CD14-positive monocyte (primary cell): ENCODE measurements at regions of chr3 and their contacts with region 1.

Region 1: GRCh38 chr3:11060500-11061251 is 68.1 kb downstream of the SLC6A1 start:
- DNase-seq: peak; percentile 46 to 60 (median 55)
- H3K4me3 ChIP-seq: peak overlapping the region in 1 of 3 experiments; percentile 9
- H3K4me3 Mint-ChIP-seq: peak overlapping the region; percentile 47 to 56
- H3K27ac ChIP-seq: no peak overlapping the region
- H3K27ac Mint-ChIP-seq: peak overlapping the region in 1 of 7 donors; percentile 32
- H3K4me1 ChIP-seq: peaks cover 8 to 9% of the 10 kb centered on the region in 2 donors
- H3K4me1 Mint-ChIP-seq: peaks cover 9% of the 10 kb centered on the region
- H3K27me3 ChIP-seq: peaks cover 0 to 7% of the 10 kb centered on the region in 2 donors
- H3K27me3 Mint-ChIP-seq: peaks cover 9 to 18% (median 15%) of the 10 kb centered on the region in 3 donors
- CTCF ChIP-seq: peak; percentile 92

Region 2: DNA sequence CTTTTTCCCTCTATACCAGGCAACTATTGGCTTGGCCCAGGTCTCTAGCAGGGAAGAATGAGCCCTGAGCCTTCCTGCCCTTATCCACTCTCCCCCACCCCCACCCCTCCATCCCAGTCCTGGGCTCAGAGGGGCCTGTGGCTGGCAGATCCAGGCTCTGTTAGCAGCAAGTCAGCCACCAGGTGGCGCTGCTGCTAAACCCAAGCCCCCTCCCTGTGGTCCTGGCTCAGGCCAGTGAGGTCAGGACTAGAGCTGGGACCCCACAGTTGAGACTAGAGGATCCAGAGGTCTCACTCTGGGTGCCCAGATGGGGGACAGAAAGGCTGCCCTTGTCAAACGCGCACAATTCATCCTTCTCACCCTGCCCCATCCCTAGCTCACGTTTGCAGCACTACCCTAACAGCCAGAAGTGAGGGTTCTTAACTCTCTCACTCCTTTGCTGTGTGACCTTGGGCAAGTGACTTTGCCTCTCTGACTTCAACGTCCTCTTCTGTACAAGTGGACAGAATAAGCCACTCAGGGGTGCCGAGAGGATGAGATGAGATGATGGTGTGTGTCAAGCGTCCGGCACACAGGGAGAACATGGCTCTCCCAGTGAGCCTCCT is 114.9 kb before region 1 on chr3:
- intact Hi-C with region 1: loop called (anchors 2 to 5 kb)
- DNase-seq: peak; percentile 39 to 54 (median 53)
- H3K4me3 ChIP-seq: no peak overlapping the region
- H3K4me3 Mint-ChIP-seq: no peak overlapping the region
- H3K27ac ChIP-seq: no peak overlapping the region
- H3K27ac Mint-ChIP-seq: no peak overlapping the region
- H3K4me1 ChIP-seq: no peaks in the 10 kb centered on the region
- H3K4me1 Mint-ChIP-seq: no peaks in the 10 kb centered on the region
- H3K27me3 ChIP-seq: no peaks in the 10 kb centered on the region
- H3K27me3 Mint-ChIP-seq: peaks cover 2 to 10% (median 6%) of the 10 kb centered on the region in 3 donors
- CTCF ChIP-seq: peak; percentile 86

Region 3: DNA sequence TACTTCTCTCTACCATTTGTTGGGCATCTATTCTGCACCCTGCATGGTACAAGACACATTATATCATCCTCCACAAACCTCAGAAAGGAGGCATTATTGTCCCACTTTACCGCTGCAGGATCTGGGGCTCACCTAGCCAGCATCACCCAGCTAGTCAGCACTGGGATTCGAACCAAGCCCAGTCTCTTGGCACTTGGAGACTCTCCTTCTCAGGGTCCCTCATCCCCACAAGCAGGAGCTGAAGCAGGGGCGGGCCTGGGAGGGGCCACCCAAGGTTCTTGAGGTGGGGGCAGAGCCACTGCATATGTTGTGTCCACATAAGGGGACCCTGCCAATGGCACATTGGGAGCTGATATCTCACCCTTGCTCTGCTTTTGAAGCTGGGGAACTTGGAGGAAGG is 26.8 kb before region 1 on chr3:
- intact Hi-C with region 1: no loop called
- DNase-seq: no peak
- H3K4me3 ChIP-seq: no peak overlapping the region
- H3K4me3 Mint-ChIP-seq: no peak overlapping the region
- H3K27ac ChIP-seq: no peak overlapping the region
- H3K27ac Mint-ChIP-seq: no peak overlapping the region
- H3K4me1 ChIP-seq: no peaks in the 10 kb centered on the region
- H3K4me1 Mint-ChIP-seq: no peaks in the 10 kb centered on the region
- H3K27me3 ChIP-seq: peaks cover 16 to 38% of the 10 kb centered on the region in 2 donors
- H3K27me3 Mint-ChIP-seq: peaks cover 35 to 47% (median 42%) of the 10 kb centered on the region in 3 donors
- CTCF ChIP-seq: no peak

Region 4: DNA sequence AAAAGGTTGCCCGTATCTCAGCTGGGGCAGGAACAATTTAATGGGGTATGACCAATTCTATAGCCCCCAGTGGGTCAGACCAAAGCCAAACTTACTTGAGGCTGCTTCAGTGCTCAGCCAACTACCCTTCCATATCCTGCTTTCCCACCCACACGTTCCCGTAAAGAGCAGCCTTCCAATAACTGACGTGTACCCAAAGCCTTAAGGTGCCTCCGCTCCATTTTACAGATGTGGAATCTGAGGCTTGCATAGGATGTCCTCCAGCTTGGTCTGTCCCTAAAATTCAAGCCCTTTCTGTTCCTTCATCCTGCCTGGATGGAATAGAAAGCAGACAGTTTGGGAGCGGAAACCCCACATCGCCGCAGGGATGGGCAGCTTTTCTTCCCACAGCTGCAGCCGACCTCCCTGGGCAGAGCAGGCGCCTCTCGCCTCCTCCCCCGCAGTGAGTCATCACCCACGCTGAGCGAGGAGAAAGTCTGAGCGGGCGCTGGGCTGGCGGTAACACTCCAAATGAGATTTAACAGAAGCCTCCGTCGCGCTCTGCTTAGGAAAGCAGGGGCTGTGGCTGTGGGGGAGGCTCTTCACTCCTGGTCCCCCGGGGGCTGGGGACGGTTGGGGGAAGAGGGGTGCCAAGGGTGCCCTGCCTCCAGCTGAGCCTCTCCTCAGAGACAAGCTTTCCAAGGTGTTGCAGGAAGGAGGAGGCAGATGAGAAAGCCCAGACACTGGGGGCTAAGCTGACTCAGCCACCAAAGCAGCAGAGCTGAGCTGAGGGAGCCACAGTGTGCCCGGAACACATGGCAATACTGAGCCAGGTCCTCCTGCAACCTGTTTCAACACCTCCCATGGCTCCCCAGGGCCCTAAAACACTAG is 35.8 kb after region 1 on chr3:
- intact Hi-C with region 1: loop called in 1 of 2 experiments (anchors 5 kb)
- DNase-seq: peak; percentile 47 to 59 (median 55)
- H3K4me3 ChIP-seq: peak overlapping the region in 1 of 3 experiments; percentile 57
- H3K4me3 Mint-ChIP-seq: peak overlapping the region; percentile 51 to 62
- H3K27ac ChIP-seq: peak overlapping the region in 1 of 2 donors; percentile 11
- H3K27ac Mint-ChIP-seq: peak overlapping the region in 4 of 7 donors; percentile 9 to 71 (median 28)
- H3K4me1 ChIP-seq: peaks cover 12% of the 10 kb centered on the region in 2 donors
- H3K4me1 Mint-ChIP-seq: peaks cover 11% of the 10 kb centered on the region
- H3K27me3 ChIP-seq: peaks cover 0 to 4% of the 10 kb centered on the region in 2 donors
- H3K27me3 Mint-ChIP-seq: peaks cover 6 to 14% (median 12%) of the 10 kb centered on the region in 3 donors
- CTCF ChIP-seq: no peak

Region 5: GRCh38 chr3:11155341-11156025 is 94.8 kb after region 1 on chr3:
- intact Hi-C with region 1: loop called in 1 of 2 experiments (anchors 10 kb)
- DNase-seq: peak in 2 of 3 donors; percentile 4 to 22
- H3K4me3 ChIP-seq: no peak overlapping the region
- H3K4me3 Mint-ChIP-seq: peak overlapping the region; percentile 31 to 85
- H3K27ac ChIP-seq: no peak overlapping the region
- H3K27ac Mint-ChIP-seq: peak overlapping the region in 1 of 7 donors; percentile 2
- H3K4me1 ChIP-seq: peaks cover 28 to 43% of the 10 kb centered on the region in 2 donors
- H3K4me1 Mint-ChIP-seq: peaks cover 46% of the 10 kb centered on the region
- H3K27me3 ChIP-seq: peaks cover 31 to 43% of the 10 kb centered on the region in 2 donors
- H3K27me3 Mint-ChIP-seq: peaks cover 30 to 40% (median 36%) of the 10 kb centered on the region in 3 donors
- CTCF ChIP-seq: peak; percentile 49

Region 6: DNA sequence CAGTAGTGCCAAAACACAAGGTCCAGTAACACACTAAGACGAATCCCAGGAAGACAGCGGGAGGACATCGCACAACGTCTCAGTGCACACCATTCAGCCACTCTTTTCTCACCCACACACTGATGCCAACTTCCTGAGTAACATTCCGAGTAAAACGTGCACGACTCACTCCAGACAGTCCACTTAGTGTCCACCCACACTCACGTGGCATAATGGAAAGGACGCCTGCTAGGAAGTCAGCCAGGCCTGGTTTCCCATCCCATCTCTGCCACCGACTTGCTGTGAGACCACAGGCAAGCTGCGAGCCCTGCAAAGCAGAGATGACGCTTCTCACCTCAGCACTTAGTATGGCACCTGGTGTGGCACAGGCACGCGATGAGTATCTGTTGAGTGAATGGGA is 619.8 kb after region 1 on chr3:
- intact Hi-C with region 1: no loop called
- DNase-seq: no peak
- H3K4me3 ChIP-seq: no peak overlapping the region
- H3K4me3 Mint-ChIP-seq: no peak overlapping the region
- H3K27ac ChIP-seq: no peak overlapping the region
- H3K27ac Mint-ChIP-seq: no peak overlapping the region
- H3K4me1 ChIP-seq: no peaks in the 10 kb centered on the region
- H3K4me1 Mint-ChIP-seq: no peaks in the 10 kb centered on the region
- H3K27me3 ChIP-seq: no peaks in the 10 kb centered on the region
- H3K27me3 Mint-ChIP-seq: peaks cover 0 to 2% (median 0%) of the 10 kb centered on the region in 3 donors
- CTCF ChIP-seq: no peak